Lower leg skin (tissue), 4 donors: ENCODE measurements at regions of chr16 and their contacts with region 1.

Region 1: DNA sequence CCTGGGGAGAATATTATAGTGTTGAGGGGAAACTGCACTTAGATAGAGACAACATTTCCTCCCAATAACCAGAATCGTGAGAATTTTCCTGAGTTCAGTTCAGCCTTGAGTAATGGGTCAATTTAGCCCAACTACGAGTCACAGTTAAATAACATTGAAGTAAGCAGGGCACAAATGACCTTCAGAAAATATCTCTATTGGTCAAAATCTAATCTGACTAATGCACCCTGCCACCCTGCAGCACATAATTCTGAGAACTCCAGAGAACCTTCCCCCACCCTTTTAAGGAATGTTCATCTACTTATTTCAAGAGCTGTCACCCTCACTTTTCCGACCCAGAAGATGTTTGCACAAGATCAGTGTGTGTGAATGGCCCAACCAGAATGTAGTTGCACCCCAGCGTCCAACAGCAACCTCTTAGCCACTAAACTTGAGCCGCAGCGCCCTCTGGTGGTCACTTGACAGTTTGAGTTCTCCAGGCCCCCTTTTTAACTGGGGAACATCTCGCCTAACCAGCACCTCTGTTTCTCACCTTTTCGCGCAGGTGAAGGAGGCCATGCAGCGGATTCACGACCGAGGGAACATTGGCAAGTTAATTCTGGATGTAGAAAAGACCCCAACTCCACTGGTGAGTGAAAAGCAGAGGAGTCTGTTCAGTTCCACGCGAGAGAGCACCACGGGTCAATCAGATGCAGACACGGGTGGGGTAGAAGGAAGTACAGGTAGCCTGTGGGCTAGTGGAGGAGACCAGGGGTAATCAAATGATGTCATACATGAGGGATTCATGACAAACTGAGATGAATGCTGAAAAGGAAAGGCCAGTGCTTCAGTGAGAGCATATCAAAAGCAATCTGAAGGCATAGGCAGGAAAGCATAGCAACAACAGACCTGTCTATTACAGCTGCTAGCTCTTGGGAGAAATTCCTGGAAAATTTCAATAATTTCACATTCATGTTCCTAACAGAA is 50.8 kb upstream of the CLEC3A start:
- DNase-seq: peak; percentile 69 to 96
- H3K4me3 ChIP-seq: no peak overlapping the region
- CTCF ChIP-seq: peak in 1 of 3 donors; percentile 73
- POLR2A ChIP-seq: no peak

Region 2: DNA sequence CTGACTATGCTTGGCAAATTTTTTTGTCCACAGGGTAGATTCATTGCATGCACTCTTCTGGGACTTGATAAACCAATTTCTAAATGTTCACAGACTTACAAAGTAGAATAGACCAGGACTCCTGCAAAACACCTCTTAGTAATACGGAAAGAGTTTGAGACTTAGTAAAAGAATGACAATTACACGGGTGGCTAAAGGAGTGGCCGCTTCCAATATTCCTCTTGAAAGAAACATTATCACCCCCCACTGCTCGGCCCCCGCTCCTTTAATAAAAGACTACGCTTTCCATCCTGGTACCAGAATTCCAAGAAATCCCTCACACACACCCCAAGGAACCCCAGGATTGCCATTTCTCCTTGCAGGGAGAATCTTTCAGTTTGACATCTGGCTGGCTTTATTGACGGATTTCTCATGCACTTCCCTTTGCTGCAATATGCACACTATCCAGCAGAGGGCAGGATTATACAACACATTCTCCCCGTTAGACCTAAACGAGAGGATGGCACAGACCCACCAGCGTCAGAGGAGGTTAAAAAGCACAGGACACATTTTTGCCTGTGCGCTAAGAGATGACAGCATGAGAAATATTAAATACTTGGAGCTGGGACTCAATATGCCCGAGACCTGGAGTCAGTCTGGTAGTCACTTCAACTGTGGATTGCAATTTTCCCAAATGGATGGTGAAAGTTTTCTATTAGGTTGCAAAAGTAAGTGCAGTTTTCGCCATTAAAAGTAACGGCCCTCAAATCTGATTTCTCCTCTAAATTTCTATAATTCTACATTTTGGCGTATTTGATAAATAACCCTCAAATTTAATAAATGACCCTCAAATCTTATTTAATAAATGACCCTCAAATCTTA is 295.9 kb before region 1 on chr16:
- intact Hi-C with region 1: loop called (anchors 5 kb)
- DNase-seq: peak; percentile 69 to 89
- H3K4me3 ChIP-seq: no peak overlapping the region
- CTCF ChIP-seq: peak in 1 of 3 donors; percentile 77
- POLR2A ChIP-seq: no peak

Region 3: GRCh38 chr16:78060293-78060692 is 88.7 kb after region 1 on chr16:
- intact Hi-C with region 1: no loop called
- DNase-seq: no peak
- H3K4me3 ChIP-seq: no peak overlapping the region
- CTCF ChIP-seq: no peak
- POLR2A ChIP-seq: no peak